IMR-90 (cell line): ENCODE measurements at regions of chr2 and their contacts with region 1.

Region 1: DNA sequence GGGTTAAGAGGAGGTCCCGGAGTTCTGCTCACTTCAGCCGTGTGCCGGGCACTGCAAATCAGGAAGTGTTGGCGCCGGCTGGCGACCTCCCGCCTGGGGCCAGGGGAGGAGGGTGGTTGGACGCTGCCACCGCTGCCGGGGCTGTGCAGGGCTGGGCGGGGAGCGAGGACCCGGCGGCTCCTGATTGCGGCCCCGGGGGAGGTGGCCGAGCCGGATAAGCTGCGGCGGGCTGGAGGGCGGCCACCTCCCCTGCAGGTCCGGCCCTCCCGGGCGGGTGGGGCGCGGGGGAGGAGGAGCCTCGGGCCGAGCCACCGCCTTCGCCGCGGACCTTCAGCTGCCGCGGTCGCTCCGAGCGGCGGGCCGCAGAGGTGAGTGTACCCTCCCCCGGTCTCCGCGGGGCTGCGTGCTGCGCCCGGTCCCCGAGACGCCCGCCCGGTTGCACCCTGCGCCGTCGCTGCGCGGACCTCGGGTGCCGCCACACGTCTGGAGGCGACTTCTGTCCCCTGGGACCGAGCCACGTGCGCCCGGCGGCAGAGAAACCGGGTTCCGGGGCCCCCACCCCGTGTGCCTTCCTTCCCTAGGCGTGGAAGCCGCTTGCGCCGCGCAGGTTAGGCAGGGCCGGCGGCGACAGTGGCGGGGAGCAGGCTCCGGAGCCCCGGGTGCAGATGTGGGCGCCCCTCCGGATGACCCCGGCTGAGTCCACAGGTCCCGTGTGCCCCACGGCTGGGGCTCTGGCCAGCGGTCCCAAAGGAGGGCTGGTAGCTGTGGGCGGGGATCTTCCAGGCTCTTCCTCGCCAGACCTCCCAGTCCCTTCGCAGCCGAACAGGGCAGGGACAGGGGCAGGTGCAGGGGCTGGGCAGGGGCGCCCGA is at the start of gene STEAP3:
- DNase-seq: peak; percentile 35
- ATAC-seq: peak; percentile 92
- H3K4me3 ChIP-seq: peak within 1 kb of the TSS; percentile 91
- H3K27ac ChIP-seq: peak within 1 kb of the TSS; percentile 29; the same call in 1 of the 2 replicates
- H3K4me1 ChIP-seq: peaks cover 19% of the 10 kb centered on the region
- H3K27me3 ChIP-seq: no peaks in the 10 kb centered on the region; the same call in 1 of the 2 replicates
- CTCF ChIP-seq: no peak
- POLR2A ChIP-seq: no peak
- RAD21 ChIP-seq: no peak
- total RNA-seq, gene STEAP3: 18.9 and 19.4 TPM in 2 replicates

Region 2: GRCh38 chr2:119255760-119256581 is 32.2 kb after region 1 on chr2:
- CTCF ChIA-PET with region 1: interaction called, 5 read pairs
- POLR2A ChIA-PET with region 1: no interaction called
- dilution Hi-C with region 1: no loop called
- in situ Hi-C with region 1: no loop called
- intact Hi-C with region 1: loop called (anchors 2 kb)
- DNase-seq: peak; percentile 98
- ATAC-seq: peak; percentile 90
- H3K4me3 ChIP-seq: no peak overlapping the region
- H3K27ac ChIP-seq: peak overlapping the region; percentile 3; the same call in 1 of the 2 replicates
- H3K4me1 ChIP-seq: peaks cover 27% of the 10 kb centered on the region
- H3K27me3 ChIP-seq: no peaks in the 10 kb centered on the region
- CTCF ChIP-seq: no peak
- POLR2A ChIP-seq: peak; percentile 45; the same call in 1 of the 2 replicates
- RAD21 ChIP-seq: no peak

Region 3: GRCh38 chr2:119366649-119367471 is 143.1 kb after region 1 on chr2 and contains the starts of genes C2orf76 and DBI:
- CTCF ChIA-PET with region 1: no interaction called
- POLR2A ChIA-PET with region 1: no interaction called
- dilution Hi-C with region 1: no loop called
- in situ Hi-C with region 1: no loop called
- intact Hi-C with region 1: loop called (anchors 5 kb)
- DNase-seq: peak; percentile 93
- ATAC-seq: peak; percentile 98
- H3K4me3 ChIP-seq: peak within 1 kb of the TSS; percentile 59
- H3K27ac ChIP-seq: peak within 1 kb of the TSS; percentile 58
- H3K4me1 ChIP-seq: peaks cover 8% of the 10 kb centered on the region
- H3K27me3 ChIP-seq: no peaks in the 10 kb centered on the region
- CTCF ChIP-seq: no peak
- POLR2A ChIP-seq: peak; percentile 88
- RAD21 ChIP-seq: no peak
- total RNA-seq, gene C2orf76: 9.7 and 10.6 TPM in 2 replicates
- total RNA-seq, gene DBI: 42.5 and 69.7 TPM in 2 replicates